ENCODE measurements at regions of chr9 and their contacts with region 1.

Region 1: DNA sequence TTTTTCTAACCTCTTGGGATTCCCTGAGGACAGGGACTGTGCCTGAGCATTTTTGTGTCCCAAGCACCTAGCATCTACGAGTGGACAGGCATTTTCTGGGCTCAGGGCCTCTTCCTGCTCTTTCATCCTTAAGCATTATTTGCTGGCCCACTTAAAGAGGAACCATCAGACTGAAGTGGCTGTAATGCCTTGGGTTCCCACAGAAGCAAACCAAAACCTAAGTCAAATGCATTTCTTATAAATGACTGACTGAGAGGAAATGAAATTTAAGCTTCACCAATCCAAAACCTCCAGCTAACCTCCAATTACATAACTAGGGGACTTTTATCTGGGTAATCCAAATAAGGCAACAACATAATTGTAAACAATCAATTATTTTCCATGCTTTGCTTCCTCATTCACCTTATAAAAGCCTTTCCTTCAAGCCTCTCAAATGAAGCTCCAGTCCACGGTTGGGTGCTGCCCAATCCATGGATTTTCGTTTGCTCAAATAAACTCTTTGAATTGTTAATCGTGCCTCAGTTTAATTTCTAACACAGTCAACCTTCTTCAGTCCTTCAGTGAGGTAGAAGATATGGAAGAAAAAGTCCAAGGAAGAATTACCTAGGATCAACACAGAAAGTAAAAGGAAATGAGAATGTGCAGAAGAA is 25.3 kb upstream of the SLC31A2 start:
- DNase-seq: no peak
- ATAC-seq: no peak

Region 2: DNA sequence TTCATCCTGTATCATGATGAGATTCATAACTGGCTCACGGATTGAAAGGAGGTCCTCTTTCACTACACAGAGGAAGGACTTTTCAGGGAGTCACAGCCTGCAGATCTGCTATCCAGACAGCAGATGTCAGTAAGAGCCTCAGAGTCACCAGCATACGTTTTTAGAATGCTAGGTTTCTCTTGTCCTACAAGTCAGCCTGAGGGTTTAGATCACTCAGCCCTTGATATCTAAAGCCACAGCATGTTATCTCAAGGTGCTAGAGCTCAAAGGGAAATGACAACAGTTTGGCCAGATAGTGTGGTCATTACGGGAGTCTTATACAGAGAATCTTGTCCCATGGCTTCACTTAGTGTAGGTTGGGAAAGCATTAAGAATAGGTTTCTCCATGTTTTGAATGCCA is 204.0 kb before region 1 on chr9:
- intact Hi-C with region 1: loop called in 1 of 2 experiments (anchors 5 kb)
- DNase-seq: no peak
- ATAC-seq: peak in 1 of 2 donors; percentile 48

Measured in left cardiac atrium (tissue), 4 donors.